Thyroid gland (tissue), 4 donors: ENCODE measurements at regions of chr4 and their contacts with region 1.

Region 1: GRCh38 chr4:16001484-16001858 is 38.5 kb upstream of the FGFBP2 start:
- DNase-seq: peak; percentile 66 to 67
- H3K4me3 ChIP-seq: no peak overlapping the region
- H3K27ac ChIP-seq: no peak overlapping the region
- H3K4me1 ChIP-seq: no peaks in the 10 kb centered on the region
- H3K27me3 ChIP-seq: no peaks in the 10 kb centered on the region
- CTCF ChIP-seq: peak; percentile 38 to 96 (median 78)
- POLR2A ChIP-seq: no peak

Region 2: GRCh38 chr4:15805583-15806517 is 195.6 kb before region 1 on chr4:
- intact Hi-C with region 1: loop called (anchors 10 kb)
- DNase-seq: peak; percentile 25 to 39
- H3K4me3 ChIP-seq: no peak overlapping the region
- H3K27ac ChIP-seq: no peak overlapping the region
- H3K4me1 ChIP-seq: no peaks in the 10 kb centered on the region
- H3K27me3 ChIP-seq: no peaks in the 10 kb centered on the region
- CTCF ChIP-seq: peak; percentile 31 to 78 (median 66)
- POLR2A ChIP-seq: no peak

Region 3: GRCh38 chr4:15882675-15883086 is 118.8 kb before region 1 on chr4:
- intact Hi-C with region 1: loop called (anchors 5 kb)
- DNase-seq: peak; percentile 44 to 51
- H3K4me3 ChIP-seq: no peak overlapping the region
- H3K27ac ChIP-seq: no peak overlapping the region
- H3K4me1 ChIP-seq: no peaks in the 10 kb centered on the region
- H3K27me3 ChIP-seq: no peaks in the 10 kb centered on the region
- CTCF ChIP-seq: peak; percentile 45 to 90 (median 86)
- POLR2A ChIP-seq: no peak

Region 4: DNA sequence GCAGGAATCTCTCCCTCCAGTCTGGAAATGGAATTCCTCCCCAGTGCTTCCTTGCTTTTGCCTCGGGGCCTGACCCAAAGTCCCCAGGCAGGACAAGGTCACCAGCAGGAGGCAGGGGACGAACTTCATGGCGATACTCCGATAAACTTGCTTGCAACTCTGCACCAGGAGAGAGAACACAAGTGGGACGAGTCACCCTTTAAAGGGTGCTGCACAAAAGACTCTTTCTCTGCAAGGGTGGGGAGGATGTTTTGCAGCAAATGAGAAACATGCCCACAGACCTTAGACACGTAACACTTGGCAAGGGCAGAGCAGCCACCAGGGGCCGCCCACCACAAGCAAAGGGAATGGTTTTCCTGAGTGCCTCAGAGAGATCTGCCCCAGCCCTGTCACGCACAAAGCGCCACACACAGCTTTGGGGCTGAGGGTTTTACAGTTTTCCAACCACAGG is 38.4 kb before region 1 on chr4 and contains the start of gene FGFBP2:
- intact Hi-C with region 1: loop called (anchors 5 kb)
- DNase-seq: peak; percentile 54 to 62
- H3K4me3 ChIP-seq: no peak within 1 kb of the TSS
- H3K27ac ChIP-seq: no peak within 1 kb of the TSS
- H3K4me1 ChIP-seq: no peaks in the 10 kb centered on the region
- H3K27me3 ChIP-seq: no peaks in the 10 kb centered on the region
- CTCF ChIP-seq: peak in 5 of 6 experiments; percentile 39 to 58 (median 47)
- POLR2A ChIP-seq: no peak
- total RNA-seq, gene FGFBP2: 0.67 to 3.7 (median 0.92) TPM